CD4-positive, alpha-beta T cell (primary cell): ENCODE measurements at regions of chr9 and their contacts with region 1.

Region 1: DNA sequence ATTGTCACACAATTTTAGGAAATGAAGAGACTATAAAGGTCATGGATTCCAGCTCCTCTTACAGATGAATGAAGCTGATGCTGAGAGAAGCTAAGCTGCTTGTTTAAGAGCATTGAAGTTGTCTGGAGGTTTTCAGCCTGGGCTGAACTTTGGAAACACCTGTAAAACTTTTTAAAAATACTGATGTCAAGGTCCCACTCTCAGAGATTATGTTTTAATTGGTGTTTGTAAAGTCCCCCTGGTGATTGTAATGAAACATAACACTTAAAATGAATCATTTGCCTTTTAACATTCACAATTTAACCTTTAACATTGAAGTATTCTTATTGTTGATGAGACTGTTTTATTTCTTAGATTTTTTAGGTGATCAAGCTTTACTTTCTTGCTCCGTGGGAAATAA is 16.4 kb downstream of the RAD23B start:
- DNase-seq: peak in 3 of 14 experiments; percentile 11 to 32 (median 32)
- ATAC-seq: peak; percentile 59
- H3K4me3 ChIP-seq: no peak overlapping the region
- H3K4me3 Mint-ChIP-seq: no peak overlapping the region
- H3K27ac ChIP-seq: no peak overlapping the region
- H3K27ac Mint-ChIP-seq: peak overlapping the region; percentile 32
- H3K4me1 ChIP-seq: peaks cover 9% of the 10 kb centered on the region
- H3K4me1 Mint-ChIP-seq: peaks cover 49% of the 10 kb centered on the region
- H3K27me3 ChIP-seq: no peaks in the 10 kb centered on the region
- H3K27me3 Mint-ChIP-seq: no peaks in the 10 kb centered on the region
- CTCF ChIP-seq: no peak

Region 2: GRCh38 chr9:107243751-107244150 is 55.7 kb before region 1 on chr9:
- CTCF ChIA-PET with region 1: no interaction called
- POLR2A ChIA-PET with region 1: no interaction called
- intact Hi-C with region 1: loop called (anchors 2 to 10 kb)
- DNase-seq: peak in 5 of 14 experiments; percentile 4 to 37 (median 13)
- ATAC-seq: peak; percentile 56
- H3K4me3 ChIP-seq: no peak overlapping the region
- H3K4me3 Mint-ChIP-seq: no peak overlapping the region
- H3K27ac ChIP-seq: no peak overlapping the region
- H3K27ac Mint-ChIP-seq: no peak overlapping the region
- H3K4me1 ChIP-seq: peaks cover 6% of the 10 kb centered on the region
- H3K4me1 Mint-ChIP-seq: peaks cover 4% of the 10 kb centered on the region
- H3K27me3 ChIP-seq: no peaks in the 10 kb centered on the region
- H3K27me3 Mint-ChIP-seq: no peaks in the 10 kb centered on the region
- CTCF ChIP-seq: no peak

Region 3: DNA sequence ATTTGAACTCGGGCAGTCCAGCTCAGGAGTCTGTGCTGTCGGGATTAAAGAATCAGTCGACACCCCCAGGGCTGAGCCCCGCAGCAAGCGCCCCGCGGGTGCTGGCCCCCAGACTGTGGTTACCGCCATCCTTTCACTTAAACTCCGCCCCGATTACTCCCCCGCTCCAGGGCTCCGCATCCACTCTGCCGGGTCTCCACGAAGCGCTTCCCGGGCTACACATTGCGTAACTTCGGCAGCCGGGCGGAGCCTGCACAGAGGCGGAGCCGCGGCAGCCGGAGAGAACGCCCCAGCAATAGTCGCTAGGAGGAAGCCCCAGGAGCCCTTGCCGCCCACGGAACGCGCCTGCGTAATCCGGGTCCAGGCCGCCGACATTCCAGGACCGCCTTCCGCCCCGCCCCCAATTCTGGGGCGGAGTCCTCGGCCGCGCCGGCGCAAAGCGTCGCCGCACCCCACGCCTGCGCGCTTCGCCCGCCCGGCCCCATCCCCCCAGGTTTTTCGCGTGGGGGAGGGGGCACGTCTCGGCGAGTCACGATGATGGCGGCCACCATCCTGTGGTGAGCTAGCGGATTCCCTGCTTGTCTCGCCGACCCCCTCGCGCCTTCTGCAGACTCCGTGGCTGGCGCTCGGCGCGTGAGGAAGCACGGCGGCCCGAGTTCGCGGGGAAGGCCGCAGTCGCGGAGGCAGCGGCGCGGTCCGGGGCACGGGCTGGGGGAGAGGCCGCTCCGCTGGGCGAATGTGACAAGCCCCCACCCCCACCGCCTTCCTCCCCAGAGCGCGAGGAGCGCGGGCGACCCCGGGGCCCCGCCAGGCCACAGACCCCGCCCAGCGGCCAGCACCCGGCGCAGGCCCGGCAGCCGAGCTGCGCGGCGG is 16.4 kb before region 1 on chr9 and contains the start of gene RAD23B:
- CTCF ChIA-PET with region 1: interaction called, 5 read pairs
- POLR2A ChIA-PET with region 1: interaction called, 4 read pairs
- intact Hi-C with region 1: loop called in 1 of 2 experiments (anchors 2 kb)
- DNase-seq: peak; percentile 95 to 99 (median 98)
- ATAC-seq: peak; percentile 86
- H3K4me3 ChIP-seq: peak within 1 kb of the TSS; percentile 64
- H3K4me3 Mint-ChIP-seq: peak within 1 kb of the TSS; percentile 99
- H3K27ac ChIP-seq: peak within 1 kb of the TSS; percentile 66 to 84
- H3K27ac Mint-ChIP-seq: peak within 1 kb of the TSS; percentile 91
- H3K4me1 ChIP-seq: peaks cover 27% of the 10 kb centered on the region
- H3K4me1 Mint-ChIP-seq: peaks cover 41% of the 10 kb centered on the region
- H3K27me3 ChIP-seq: no peaks in the 10 kb centered on the region
- H3K27me3 Mint-ChIP-seq: no peaks in the 10 kb centered on the region
- CTCF ChIP-seq: no peak
- total RNA-seq, gene RAD23B: 63.8 to 68.1 TPM

Region 4: DNA sequence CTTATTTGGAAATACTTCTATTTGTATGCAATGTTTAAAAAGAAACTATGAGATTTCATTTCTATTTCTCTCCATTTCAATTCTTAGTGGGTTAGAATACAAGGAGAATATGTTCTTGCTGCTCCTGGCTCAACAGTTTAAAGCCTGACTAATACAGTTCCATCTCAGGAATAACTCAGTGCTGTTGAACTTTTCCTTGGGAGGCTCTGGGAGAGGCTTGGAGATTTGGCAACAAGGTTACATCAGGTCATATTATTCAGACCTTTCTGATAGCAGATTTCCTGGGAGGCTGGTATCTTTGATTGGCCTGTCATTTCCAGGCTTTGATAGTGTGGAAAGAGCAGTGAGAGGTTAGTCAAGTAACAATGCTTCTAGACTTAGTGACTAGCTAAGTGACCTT is 671.8 kb after region 1 on chr9:
- CTCF ChIA-PET with region 1: no interaction called
- POLR2A ChIA-PET with region 1: no interaction called
- intact Hi-C with region 1: no loop called
- DNase-seq: no peak
- ATAC-seq: no peak
- H3K4me3 ChIP-seq: no peak overlapping the region
- H3K4me3 Mint-ChIP-seq: no peak overlapping the region
- H3K27ac ChIP-seq: no peak overlapping the region
- H3K27ac Mint-ChIP-seq: no peak overlapping the region
- H3K4me1 ChIP-seq: no peaks in the 10 kb centered on the region
- H3K4me1 Mint-ChIP-seq: no peaks in the 10 kb centered on the region
- H3K27me3 ChIP-seq: no peaks in the 10 kb centered on the region
- H3K27me3 Mint-ChIP-seq: no peaks in the 10 kb centered on the region
- CTCF ChIP-seq: no peak